AG04449 (cell line): ENCODE measurements at regions of chr6 and their contacts with region 1.

Region 1: DNA sequence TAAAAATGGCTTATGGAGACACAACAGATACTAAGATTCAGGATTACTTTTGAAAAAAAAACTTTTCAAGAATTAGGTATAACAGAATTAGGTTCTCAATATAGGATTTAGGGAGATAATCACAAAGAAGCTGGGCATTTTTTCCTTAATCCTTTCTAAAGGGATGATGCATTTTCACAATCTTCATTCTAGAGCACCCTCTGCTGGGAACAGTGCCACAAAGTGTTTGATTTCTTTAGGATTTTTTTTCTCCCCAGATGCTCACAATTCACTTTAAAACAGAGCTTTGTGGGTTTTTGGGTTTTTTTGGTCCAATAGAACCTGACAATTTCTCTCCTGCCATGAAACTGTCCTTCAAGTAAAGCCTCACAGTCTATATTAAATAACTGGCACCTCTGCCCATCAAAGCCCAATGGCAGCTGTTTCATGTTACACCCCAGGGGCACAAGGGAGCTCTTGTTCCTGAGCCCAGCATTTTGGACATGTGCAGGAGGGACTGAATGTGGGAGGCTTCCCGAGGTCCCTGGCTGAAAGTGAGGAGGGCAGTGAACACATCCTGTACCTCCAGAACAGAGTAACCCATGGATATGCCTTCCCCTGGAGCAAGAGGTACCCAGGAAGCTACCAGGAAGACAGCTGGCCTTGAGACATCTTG is 39.7 kb downstream of the PREP start:
- DNase-seq: no peak
- H3K4me3 ChIP-seq: no peak overlapping the region
- CTCF ChIP-seq: peak; percentile 27

Region 2: DNA sequence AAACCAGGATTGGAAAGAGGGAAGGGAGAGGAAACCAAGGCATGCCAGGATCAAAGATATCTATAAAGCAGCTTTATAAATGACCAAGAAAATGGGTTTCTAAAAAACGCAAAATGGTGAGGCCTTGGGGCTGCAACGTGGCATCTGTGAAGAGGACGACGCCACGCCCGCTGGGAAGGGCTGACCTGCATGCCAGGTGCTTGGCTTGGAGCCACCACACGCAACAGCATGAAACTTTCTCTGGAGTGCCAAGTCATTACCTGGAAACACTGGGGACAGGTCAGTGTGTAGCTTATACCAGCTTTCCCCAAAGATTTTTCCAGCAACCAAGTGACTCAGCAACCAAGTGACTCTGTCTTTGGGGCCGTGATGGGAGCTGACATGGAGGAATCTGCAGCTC is 265.9 kb before region 1 on chr6:
- CTCF ChIA-PET with region 1: interaction called, 301 read pairs
- POLR2A ChIA-PET with region 1: no interaction called
- DNase-seq: no peak
- H3K4me3 ChIP-seq: no peak overlapping the region
- CTCF ChIP-seq: no peak

Region 3: DNA sequence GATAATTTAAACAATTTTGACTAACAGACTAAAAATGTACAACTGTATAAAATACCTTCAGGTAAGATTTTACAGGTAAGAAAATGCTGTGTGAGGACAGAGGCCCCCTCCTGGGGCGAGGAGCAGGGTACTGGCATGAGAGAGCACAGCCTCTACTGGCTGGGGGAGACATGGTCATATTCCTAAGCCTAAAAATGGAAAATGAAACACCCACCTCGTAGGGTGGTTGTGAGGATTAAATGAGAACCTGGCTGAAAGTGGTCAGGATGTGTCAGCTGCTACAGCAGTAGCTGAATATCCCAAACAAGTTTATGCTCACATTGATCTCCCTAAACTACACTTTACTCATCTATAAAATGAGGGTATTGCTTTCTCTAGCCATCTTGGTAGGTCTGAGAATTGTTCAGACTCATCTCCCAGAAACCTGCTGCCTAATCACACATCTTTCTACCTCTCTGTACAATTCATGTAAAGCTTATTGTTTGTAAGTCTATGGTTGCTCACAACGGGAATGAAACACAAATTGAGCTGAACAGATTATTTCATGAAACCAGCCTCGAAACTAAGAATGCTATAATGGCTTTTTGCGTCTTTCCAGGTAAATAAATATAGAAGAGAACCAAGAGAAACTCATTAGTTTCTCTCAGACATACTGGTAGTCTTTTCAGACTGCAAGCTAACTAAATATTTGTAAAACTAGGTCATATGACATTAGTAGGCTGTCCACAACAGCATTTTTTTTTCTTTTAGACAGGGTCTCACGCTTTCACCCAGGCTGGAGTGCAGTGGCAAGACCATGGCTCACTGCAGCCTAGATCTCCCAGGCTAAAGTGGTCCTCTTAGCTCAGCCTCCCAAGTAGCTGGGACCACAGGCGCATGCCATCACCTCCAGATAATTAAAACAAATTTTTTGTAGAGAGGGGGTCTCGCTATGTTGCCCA is 253.0 kb before region 1 on chr6:
- CTCF ChIA-PET with region 1: interaction called, 27 read pairs
- POLR2A ChIA-PET with region 1: no interaction called
- DNase-seq: no peak
- H3K4me3 ChIP-seq: no peak overlapping the region
- CTCF ChIP-seq: no peak

Region 4: GRCh38 chr6:105116150-105116549 is 247.1 kb before region 1 on chr6:
- CTCF ChIA-PET with region 1: interaction called, 27 read pairs
- POLR2A ChIA-PET with region 1: no interaction called
- DNase-seq: no peak
- H3K4me3 ChIP-seq: no peak overlapping the region
- CTCF ChIP-seq: no peak

Region 5: GRCh38 chr6:105136431-105137350 is 226.5 kb before region 1 on chr6:
- CTCF ChIA-PET with region 1: interaction called, 22 read pairs
- POLR2A ChIA-PET with region 1: no interaction called
- DNase-seq: no peak
- H3K4me3 ChIP-seq: peak overlapping the region; percentile 74
- CTCF ChIP-seq: peak; percentile 47

Region 6: GRCh38 chr6:105374010-105374420 is 10.8 kb after region 1 on chr6:
- CTCF ChIA-PET with region 1: interaction called, 76 read pairs
- POLR2A ChIA-PET with region 1: no interaction called
- DNase-seq: peak; percentile 62
- H3K4me3 ChIP-seq: no peak overlapping the region
- CTCF ChIP-seq: no peak

Region 7: GRCh38 chr6:105526198-105526872 is 163.1 kb after region 1 on chr6:
- CTCF ChIA-PET with region 1: no interaction called
- POLR2A ChIA-PET with region 1: no interaction called
- DNase-seq: no peak
- H3K4me3 ChIP-seq: no peak overlapping the region
- CTCF ChIP-seq: no peak